HepG2 (cell line): ENCODE measurements at regions of chr5 and their contacts with region 1.

Region 1: DNA sequence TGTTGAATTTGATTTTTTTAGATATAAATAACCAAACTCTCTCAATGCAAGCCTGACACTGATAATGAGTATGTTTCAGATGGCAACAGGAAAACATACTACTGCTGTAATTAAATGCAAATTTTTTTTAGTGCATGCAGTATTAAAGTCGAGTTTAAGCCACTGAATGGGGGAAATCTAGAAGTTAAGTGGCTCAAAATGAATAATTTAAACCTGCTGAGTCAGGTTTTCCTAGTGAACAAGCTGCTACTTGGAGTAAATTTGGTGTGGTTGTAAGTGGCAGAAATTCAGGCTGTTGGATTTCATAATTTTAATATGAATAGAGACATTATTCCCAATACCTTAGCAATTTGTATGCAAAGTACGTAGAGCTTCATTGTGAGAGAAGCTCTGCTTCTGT is 121.8 kb downstream of the SLF1 start:
- DNase-seq: no peak
- ATAC-seq: no peak
- H3K4me3 ChIP-seq: no peak overlapping the region
- H3K27ac ChIP-seq: no peak overlapping the region
- H3K4me1 ChIP-seq: no peaks in the 10 kb centered on the region
- H3K27me3 ChIP-seq: no peaks in the 10 kb centered on the region
- CTCF ChIP-seq: no peak
- EP300 ChIP-seq: no peak
- POLR2A ChIP-seq: no peak
- RAD21 ChIP-seq: no peak

Region 2: DNA sequence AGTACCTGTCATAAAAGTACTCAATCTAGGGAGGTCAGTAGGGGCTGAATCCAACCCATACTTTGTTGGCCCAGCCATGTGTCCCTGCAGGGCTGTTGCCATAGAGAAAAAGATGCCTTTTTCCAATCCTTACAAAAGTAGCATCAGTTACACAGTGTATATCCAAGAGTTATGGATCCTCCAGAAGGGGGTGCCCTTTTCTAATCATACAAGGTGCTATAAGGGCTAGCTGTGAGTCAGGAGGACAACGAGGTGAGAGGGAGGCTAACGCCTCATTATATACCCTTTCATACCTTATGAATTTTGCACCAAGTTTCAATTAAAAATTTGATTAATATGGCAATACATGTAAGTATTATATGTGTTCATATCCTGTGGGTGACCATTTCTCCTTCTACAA is 126.7 kb before region 1 on chr5:
- CTCF ChIA-PET with region 1: interaction called, 7 read pairs
- POLR2A ChIA-PET with region 1: no interaction called
- in situ Hi-C with region 1: loop called (anchors 5 kb)
- intact Hi-C with region 1: loop called (anchors 1 kb)
- DNase-seq: peak; percentile 45
- ATAC-seq: peak; percentile 43
- H3K4me3 ChIP-seq: no peak overlapping the region
- H3K27ac ChIP-seq: no peak overlapping the region
- H3K4me1 ChIP-seq: no peaks in the 10 kb centered on the region
- H3K27me3 ChIP-seq: no peaks in the 10 kb centered on the region; a peak in 1 of 5 replicates
- CTCF ChIP-seq: peak; percentile 46
- EP300 ChIP-seq: no peak
- POLR2A ChIP-seq: no peak
- RAD21 ChIP-seq: no peak